B cell (primary cell): ENCODE measurements at regions of chr17 and their contacts with region 1.

Region 1: GRCh38 chr17:4806777-4807604 is at the start of gene PLD2:
- DNase-seq: peak; percentile 89
- ATAC-seq: peak; percentile 99
- H3K4me3 ChIP-seq: peak within 1 kb of the TSS; percentile 56 to 89 (median 72)
- H3K4me3 Mint-ChIP-seq: peak within 1 kb of the TSS; percentile 86
- H3K27ac ChIP-seq: peak within 1 kb of the TSS; percentile 55 to 79
- H3K27ac Mint-ChIP-seq: peak within 1 kb of the TSS; percentile 78
- H3K4me1 ChIP-seq: peaks cover 9 to 13% of the 10 kb centered on the region in 2 donors
- H3K4me1 Mint-ChIP-seq: peaks cover 14% of the 10 kb centered on the region
- H3K27me3 ChIP-seq: no peaks in the 10 kb centered on the region
- H3K27me3 Mint-ChIP-seq: no peaks in the 10 kb centered on the region
- CTCF ChIP-seq: no peak
- total RNA-seq, gene PLD2: 69.2 and 72.1 TPM in 2 replicates

Region 2: GRCh38 chr17:4789901-4790704 is 16.9 kb before region 1 on chr17:
- CTCF ChIA-PET with region 1: interaction called, 8 read pairs
- POLR2A ChIA-PET with region 1: interaction called, 4 read pairs
- intact Hi-C with region 1: loop called (anchors 2 kb)
- DNase-seq: peak; percentile 89
- ATAC-seq: peak; percentile 94
- H3K4me3 ChIP-seq: peak overlapping the region; percentile 27 to 70 (median 63)
- H3K4me3 Mint-ChIP-seq: peak overlapping the region; percentile 94
- H3K27ac ChIP-seq: peak overlapping the region in 1 of 2 donors; percentile 53
- H3K27ac Mint-ChIP-seq: peak overlapping the region; percentile 93
- H3K4me1 ChIP-seq: peaks cover 28 to 33% of the 10 kb centered on the region in 2 donors
- H3K4me1 Mint-ChIP-seq: peaks cover 30% of the 10 kb centered on the region
- H3K27me3 ChIP-seq: peaks cover 0 to 44% (median 27%) of the 10 kb centered on the region in 4 experiments
- H3K27me3 Mint-ChIP-seq: peaks cover 27% of the 10 kb centered on the region
- CTCF ChIP-seq: peak; percentile 81

Region 3: DNA sequence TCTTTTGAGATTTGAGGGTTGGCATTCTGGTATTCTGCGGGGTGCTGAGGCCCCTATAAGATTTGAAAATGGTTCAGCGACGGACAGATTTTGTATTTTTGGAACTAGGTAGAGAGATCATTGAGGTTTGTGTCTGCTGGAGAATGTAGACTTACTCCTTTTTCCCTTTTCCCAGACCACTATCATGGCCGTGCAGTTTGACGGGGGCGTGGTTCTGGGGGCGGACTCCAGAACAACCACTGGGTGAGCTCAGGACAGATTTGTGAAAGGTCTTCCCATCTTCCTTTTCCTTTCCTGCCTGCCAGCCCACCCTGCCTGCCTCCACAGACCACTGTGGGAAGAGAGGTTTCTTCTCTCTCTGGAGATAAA is 10.5 kb before region 1 on chr17:
- CTCF ChIA-PET with region 1: interaction called, 3 read pairs
- POLR2A ChIA-PET with region 1: interaction called, 8 read pairs
- intact Hi-C with region 1: loop called (anchors 1 kb)
- DNase-seq: no peak
- ATAC-seq: no peak
- H3K4me3 ChIP-seq: peak overlapping the region; percentile 65 to 96 (median 86)
- H3K4me3 Mint-ChIP-seq: peak overlapping the region; percentile 100
- H3K27ac ChIP-seq: peak overlapping the region in 1 of 2 donors; percentile 68
- H3K27ac Mint-ChIP-seq: peak overlapping the region; percentile 97
- H3K4me1 ChIP-seq: peaks cover 7 to 16% of the 10 kb centered on the region in 2 donors
- H3K4me1 Mint-ChIP-seq: peaks cover 11% of the 10 kb centered on the region
- H3K27me3 ChIP-seq: no peaks in the 10 kb centered on the region
- H3K27me3 Mint-ChIP-seq: no peaks in the 10 kb centered on the region
- CTCF ChIP-seq: no peak

Region 4: GRCh38 chr17:4833178-4833940 is 26.4 kb after region 1 on chr17 and contains the start of gene MINK1:
- CTCF ChIA-PET with region 1: interaction called, 3 read pairs
- POLR2A ChIA-PET with region 1: no interaction called
- intact Hi-C with region 1: loop called (anchors 1 kb)
- DNase-seq: peak; percentile 97
- ATAC-seq: peak; percentile 93
- H3K4me3 ChIP-seq: peak within 1 kb of the TSS; percentile 68 to 86 (median 79)
- H3K4me3 Mint-ChIP-seq: peak within 1 kb of the TSS; percentile 99
- H3K27ac ChIP-seq: peak within 1 kb of the TSS; percentile 77 to 85
- H3K27ac Mint-ChIP-seq: peak within 1 kb of the TSS; percentile 99
- H3K4me1 ChIP-seq: peaks cover 21 to 26% of the 10 kb centered on the region in 2 donors
- H3K4me1 Mint-ChIP-seq: peaks cover 29% of the 10 kb centered on the region
- H3K27me3 ChIP-seq: no peaks in the 10 kb centered on the region
- H3K27me3 Mint-ChIP-seq: no peaks in the 10 kb centered on the region
- CTCF ChIP-seq: no peak
- total RNA-seq, gene MINK1: 108 and 109 TPM in 2 replicates

Region 5: GRCh38 chr17:4903051-4903818 is 96.2 kb after region 1 on chr17 and contains the start of gene CHRNE:
- CTCF ChIA-PET with region 1: no interaction called
- POLR2A ChIA-PET with region 1: no interaction called
- intact Hi-C with region 1: loop called (anchors 1 kb)
- DNase-seq: peak; percentile 87
- ATAC-seq: peak; percentile 38
- H3K4me3 ChIP-seq: peak within 1 kb of the TSS in 1 of 5 experiments; percentile 38
- H3K4me3 Mint-ChIP-seq: peak within 1 kb of the TSS; percentile 72
- H3K27ac ChIP-seq: peak within 1 kb of the TSS in 1 of 2 donors; percentile 22
- H3K27ac Mint-ChIP-seq: peak within 1 kb of the TSS; percentile 82
- H3K4me1 ChIP-seq: peaks cover 45 to 53% of the 10 kb centered on the region in 2 donors
- H3K4me1 Mint-ChIP-seq: peaks cover 45% of the 10 kb centered on the region
- H3K27me3 ChIP-seq: peaks cover 0 to 29% (median 10%) of the 10 kb centered on the region in 4 experiments
- H3K27me3 Mint-ChIP-seq: peaks cover 7% of the 10 kb centered on the region
- CTCF ChIP-seq: peak; percentile 83
- total RNA-seq, gene CHRNE: 0.99 and 1.0 TPM in 2 replicates

Region 6: DNA sequence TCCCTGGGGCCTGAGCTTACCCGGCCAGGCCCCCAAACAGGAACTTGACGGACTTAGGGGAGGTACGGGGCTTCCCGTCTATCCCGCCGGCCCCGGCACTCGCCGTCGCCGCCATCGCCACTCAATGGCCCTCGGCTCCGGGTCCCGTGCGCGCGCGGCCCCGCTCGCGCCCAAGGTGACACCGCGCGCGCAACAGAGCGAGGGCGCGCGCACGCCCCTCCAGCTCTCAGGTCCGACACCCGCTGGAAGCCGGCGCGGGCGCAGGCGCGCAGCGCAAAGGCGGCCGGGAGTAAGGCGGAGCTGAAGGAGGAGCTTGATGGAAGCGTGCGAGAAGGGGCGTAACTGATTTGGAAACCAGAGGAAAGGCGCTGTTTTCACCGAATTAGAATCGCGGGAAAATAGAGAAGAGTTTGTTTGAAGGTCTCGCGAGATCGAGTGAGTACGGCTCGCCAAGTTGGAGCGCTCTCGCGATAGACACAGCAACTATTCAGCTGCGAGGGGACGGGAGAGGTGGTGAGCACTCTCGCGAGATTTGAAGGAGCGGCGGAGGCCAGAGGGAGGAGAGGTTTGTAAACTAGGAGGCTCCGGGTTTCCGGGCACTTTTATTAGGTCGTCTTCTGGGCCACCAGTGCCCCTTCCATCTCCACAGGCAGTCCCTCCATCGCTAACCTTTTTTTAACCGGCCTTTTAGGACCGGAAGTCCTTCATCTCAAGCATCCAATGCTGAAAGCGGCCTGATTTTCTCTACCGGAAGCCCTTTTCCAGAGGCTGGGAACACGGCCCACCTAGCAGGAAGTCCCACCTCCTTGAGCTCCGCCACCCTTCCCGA is 133.0 kb after region 1 on chr17 and contains the starts of genes RNF167 and SLC25A11:
- CTCF ChIA-PET with region 1: no interaction called
- POLR2A ChIA-PET with region 1: no interaction called
- intact Hi-C with region 1: loop called (anchors 5 kb)
- DNase-seq: peak; percentile 99
- ATAC-seq: peak; percentile 84
- H3K4me3 ChIP-seq: peak within 1 kb of the TSS; percentile 83 to 100 (median 86)
- H3K4me3 Mint-ChIP-seq: peak within 1 kb of the TSS; percentile 89
- H3K27ac ChIP-seq: peak within 1 kb of the TSS; percentile 84 to 87
- H3K27ac Mint-ChIP-seq: peak within 1 kb of the TSS; percentile 95
- H3K4me1 ChIP-seq: peaks cover 50 to 59% of the 10 kb centered on the region in 2 donors
- H3K4me1 Mint-ChIP-seq: peaks cover 58% of the 10 kb centered on the region
- H3K27me3 ChIP-seq: no peaks in the 10 kb centered on the region
- H3K27me3 Mint-ChIP-seq: no peaks in the 10 kb centered on the region
- CTCF ChIP-seq: no peak
- total RNA-seq, gene RNF167: 131 and 143 TPM in 2 replicates
- total RNA-seq, gene SLC25A11: 32.3 and 42.7 TPM in 2 replicates